Caco-2 (cell line): ENCODE measurements at regions of chr3 and their contacts with region 1.

Region 1: DNA sequence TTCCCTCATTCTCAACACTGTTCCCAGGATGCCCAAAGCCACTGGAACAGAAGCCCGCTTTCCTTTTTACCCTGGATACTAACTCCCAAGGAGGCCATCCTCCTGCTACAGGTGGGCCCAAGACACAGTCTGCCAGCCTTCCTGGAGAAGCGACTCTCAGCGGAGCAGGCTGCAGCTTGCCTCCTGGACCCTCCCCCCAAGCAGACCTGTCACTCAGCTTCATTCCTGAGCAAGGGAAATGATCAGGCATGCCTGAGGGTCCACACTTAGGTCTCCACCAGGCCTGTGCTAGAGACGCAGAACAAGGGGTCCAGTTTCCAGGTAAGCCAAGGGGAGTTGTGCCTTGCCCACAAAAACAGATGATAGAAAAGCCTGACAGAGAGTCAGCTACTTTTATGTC is 62.8 kb downstream of the SLCO2A1 start:
- DNase-seq: no peak
- H3K4me3 ChIP-seq: no peak overlapping the region
- H3K4me3 Mint-ChIP-seq: no peak overlapping the region
- H3K27ac Mint-ChIP-seq: no peak overlapping the region
- H3K4me1 ChIP-seq: no peaks in the 10 kb centered on the region
- H3K4me1 Mint-ChIP-seq: no peaks in the 10 kb centered on the region
- H3K27me3 ChIP-seq: no peaks in the 10 kb centered on the region
- H3K27me3 Mint-ChIP-seq: no peaks in the 10 kb centered on the region
- CTCF ChIP-seq: no peak

Region 2: GRCh38 chr3:133983126-133983525 is 16.2 kb after region 1 on chr3:
- CTCF ChIA-PET with region 1: no interaction called
- POLR2A ChIA-PET with region 1: no interaction called
- intact Hi-C with region 1: loop called (anchors 1 kb)
- DNase-seq: no peak
- H3K4me3 ChIP-seq: no peak overlapping the region
- H3K4me3 Mint-ChIP-seq: no peak overlapping the region
- H3K27ac Mint-ChIP-seq: no peak overlapping the region
- H3K4me1 ChIP-seq: peaks cover 13% of the 10 kb centered on the region
- H3K4me1 Mint-ChIP-seq: peaks cover 10% of the 10 kb centered on the region
- H3K27me3 ChIP-seq: no peaks in the 10 kb centered on the region
- H3K27me3 Mint-ChIP-seq: no peaks in the 10 kb centered on the region
- CTCF ChIP-seq: no peak